ENCODE measurements at regions of chr11 and their contacts with region 1.

Region 1: GRCh38 chr11:122781378-122782195 is 56.7 kb upstream of the CRTAM start:
- DNase-seq: peak; percentile 84 to 88 (median 84)
- ATAC-seq: peak; percentile 90
- H3K4me3 ChIP-seq: no peak overlapping the region
- H3K27ac ChIP-seq: no peak overlapping the region
- H3K4me1 ChIP-seq: peaks cover 12% of the 10 kb centered on the region
- H3K27me3 ChIP-seq: no peaks in the 10 kb centered on the region
- CTCF ChIP-seq: peak; percentile 83 to 92 (median 89)
- POLR2A ChIP-seq: no peak

Region 2: GRCh38 chr11:122584670-122585069 is 196.9 kb before region 1 on chr11:
- intact Hi-C with region 1: loop called (anchors 10 kb)
- DNase-seq: no peak
- ATAC-seq: no peak
- H3K4me3 ChIP-seq: no peak overlapping the region
- H3K27ac ChIP-seq: no peak overlapping the region
- H3K4me1 ChIP-seq: no peaks in the 10 kb centered on the region
- H3K27me3 ChIP-seq: no peaks in the 10 kb centered on the region
- CTCF ChIP-seq: no peak
- POLR2A ChIP-seq: no peak

Region 3: DNA sequence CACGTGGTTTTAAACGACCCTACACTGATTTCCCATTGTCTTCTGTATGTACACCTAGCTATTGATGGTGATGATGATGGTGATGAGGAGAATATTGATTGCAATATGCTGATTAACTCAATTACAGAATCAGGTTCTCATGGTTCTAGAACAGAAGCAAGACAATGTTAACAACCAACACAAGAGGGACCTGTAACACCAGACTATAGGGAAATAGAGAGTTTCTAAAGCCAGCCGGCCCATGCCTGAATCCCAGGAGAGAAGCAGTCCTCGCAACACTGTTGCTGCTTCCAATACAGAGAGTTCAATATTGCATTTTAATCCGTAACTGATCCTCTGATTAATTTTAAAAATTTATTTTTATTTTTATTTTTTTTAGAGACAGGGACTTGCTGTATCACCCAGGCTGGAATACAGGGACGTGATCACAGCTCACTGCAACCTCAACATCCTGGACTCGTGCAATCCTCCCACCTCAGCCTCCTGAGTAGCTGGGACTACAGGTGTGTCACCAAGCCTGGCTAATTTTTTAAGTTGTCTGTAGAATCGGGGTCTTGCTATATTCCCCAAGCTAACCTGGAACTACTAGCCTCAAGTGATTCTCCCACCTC is 148.3 kb before region 1 on chr11:
- intact Hi-C with region 1: loop called (anchors 5 kb)
- DNase-seq: peak in 1 of 4 donors; percentile 16
- ATAC-seq: peak; percentile 21
- H3K4me3 ChIP-seq: no peak overlapping the region
- H3K27ac ChIP-seq: no peak overlapping the region
- H3K4me1 ChIP-seq: peaks cover 4% of the 10 kb centered on the region
- H3K27me3 ChIP-seq: no peaks in the 10 kb centered on the region
- CTCF ChIP-seq: peak in 4 of 7 experiments; percentile 29 to 44 (median 36)
- POLR2A ChIP-seq: no peak

Region 4: DNA sequence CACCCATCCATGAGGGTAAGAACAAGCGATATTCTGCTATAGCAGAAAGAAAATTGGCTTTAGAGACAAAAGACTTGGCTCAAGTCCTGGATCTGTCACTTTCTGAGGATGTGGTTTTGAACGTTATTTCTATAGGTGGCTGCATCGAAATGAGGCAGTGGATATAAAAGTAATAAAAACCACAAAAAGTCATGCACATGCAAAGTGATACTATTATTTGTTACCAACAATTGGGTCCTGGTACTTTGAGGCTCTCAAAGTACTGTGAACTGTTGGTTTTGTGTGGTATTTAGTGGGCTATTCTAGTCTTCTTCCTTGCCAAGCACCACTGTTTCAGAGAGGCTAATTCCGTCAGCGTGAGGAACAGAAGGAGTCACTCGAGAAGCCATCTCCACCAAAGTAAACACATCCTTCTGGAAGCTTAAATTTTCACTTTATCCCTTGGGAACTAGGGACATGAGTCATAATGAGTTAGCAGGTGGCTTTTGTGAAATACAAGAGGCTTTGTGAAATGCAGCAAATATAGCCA is 113.0 kb before region 1 on chr11:
- intact Hi-C with region 1: no loop called
- DNase-seq: no peak
- ATAC-seq: no peak
- H3K4me3 ChIP-seq: no peak overlapping the region
- H3K27ac ChIP-seq: no peak overlapping the region
- H3K4me1 ChIP-seq: no peaks in the 10 kb centered on the region
- H3K27me3 ChIP-seq: no peaks in the 10 kb centered on the region
- CTCF ChIP-seq: no peak
- POLR2A ChIP-seq: no peak